Posterior vena cava (tissue), 2 donors: ENCODE measurements at regions of chr9 and their contacts with region 1.

Region 1: DNA sequence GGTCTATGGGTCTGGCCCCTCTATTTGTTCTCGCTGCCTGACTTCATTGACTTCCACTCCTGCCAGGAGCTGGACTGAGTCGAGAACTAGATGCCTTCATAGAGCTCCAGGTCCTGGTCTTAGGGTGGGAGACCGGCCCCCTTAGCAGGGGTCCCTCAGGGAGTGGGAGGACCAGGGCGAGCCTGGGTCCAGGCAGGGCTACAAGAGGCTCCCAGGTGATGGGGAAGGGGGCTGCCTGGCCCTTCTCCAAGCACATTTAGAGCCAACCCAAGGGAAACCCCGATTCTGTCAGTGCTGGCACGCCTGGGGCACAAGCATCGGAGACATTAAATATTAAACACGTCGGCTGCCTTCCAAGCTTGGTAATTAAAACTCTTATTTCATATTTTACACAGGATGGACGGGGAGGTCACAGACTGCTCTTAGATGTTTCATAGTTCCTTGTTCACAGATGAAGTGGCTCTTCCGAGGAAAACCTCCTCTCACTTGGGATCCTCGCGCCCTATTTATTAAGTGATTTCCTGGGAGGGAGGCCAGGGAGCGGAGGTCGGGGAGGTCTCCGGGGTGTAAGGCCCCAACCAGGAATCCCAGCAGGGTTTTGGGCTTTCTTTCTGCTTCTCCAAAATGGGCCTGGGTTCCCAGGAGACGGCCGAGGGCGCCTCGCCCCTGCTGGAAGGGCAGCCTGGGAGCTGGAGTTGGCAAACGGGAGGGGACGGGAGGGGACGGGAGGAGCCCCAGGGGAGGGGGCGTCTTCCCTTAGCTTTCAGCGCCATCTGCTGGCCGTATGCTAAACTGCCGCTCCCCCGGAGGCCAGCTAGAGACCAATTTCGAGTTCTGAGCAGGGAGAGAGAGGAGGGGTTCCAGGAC is 23.4 kb upstream of the ZBTB43 start:
- DNase-seq: peak; percentile 94

Region 2: DNA sequence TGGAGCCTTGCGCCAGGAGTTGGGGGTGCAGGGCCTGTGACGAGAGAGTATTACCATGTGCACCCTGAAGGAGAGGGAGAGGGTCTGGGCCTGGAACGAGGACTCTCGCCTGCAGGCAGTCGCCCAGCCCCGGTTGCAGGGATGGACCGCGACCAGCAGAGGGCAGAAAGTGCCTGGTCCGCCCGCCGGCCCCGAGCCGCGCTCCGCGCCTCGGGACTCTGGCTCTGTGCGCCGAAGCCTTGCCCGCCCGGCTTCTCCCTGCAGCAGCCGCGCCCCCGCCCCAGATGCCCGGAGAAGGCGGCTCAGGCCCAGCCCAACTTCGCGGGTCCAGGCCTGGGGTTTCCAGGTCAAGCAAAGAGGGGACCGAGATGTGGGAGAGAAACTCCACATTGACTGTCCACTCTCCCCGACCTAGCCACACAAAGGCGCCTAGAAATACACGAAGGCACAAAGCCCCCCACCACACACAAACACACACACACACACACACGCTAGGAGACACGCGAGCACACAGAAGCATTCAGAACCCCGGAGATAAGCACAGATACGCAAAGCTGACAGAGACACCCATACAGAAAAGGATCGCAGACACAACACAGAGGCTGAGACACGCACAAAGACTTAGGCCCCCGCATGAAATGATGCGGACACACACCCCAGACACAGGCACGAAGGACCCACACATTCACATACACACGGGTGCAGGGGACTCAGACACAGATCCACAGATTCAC is 169.7 kb before region 1 on chr9:
- intact Hi-C with region 1: loop called in 1 of 2 experiments (anchors 5 kb)
- DNase-seq: peak; percentile 93

Region 3: GRCh38 chr9:126636983-126637798 is 144.2 kb before region 1 on chr9:
- intact Hi-C with region 1: loop called in 1 of 2 experiments (anchors 1 kb)
- DNase-seq: no peak

Region 4: DNA sequence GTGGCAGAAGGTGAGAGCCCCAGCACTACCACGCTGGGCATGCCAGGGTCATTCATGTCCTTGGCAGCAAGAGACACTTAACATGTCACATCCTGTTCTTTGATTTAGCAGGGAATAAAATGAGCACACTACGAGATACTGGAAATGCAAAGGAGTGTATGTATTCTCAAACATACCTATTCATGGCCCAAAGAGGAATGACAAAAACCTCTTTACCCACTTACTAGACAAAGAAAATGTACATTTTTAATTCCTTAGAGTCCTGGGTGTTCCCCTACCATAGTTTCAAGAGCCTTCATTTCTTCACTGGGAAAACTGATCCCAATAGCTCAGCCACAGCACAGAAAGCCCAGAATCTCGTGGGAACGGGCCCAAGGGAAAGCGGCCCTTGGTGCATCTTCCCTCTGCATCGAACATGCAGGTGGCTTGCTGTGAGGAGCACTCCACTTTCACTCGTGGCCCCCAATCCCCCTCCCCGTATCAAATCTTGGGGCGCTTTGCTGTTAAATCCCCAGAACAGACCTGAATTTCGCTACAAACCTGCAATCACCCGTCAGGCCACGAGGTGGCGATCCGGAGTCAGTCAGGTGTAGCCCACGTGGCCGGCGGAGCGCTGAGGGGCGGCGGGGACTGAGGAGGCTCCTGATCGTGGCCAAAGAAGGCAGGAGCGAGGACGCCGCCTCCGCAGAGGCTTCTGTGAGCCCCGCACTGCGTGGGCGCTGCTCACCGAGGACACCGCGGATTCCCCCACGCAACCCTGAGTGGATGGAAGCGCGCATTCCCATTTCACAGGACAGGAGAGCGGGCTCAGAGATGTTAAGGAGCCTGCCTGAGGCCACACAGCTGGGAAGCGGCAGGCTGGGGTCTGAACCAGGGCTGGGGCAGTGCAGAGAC is 76.3 kb before region 1 on chr9:
- intact Hi-C with region 1: loop called (anchors 2 to 5 kb)
- DNase-seq: peak; percentile 93

Region 5: GRCh38 chr9:127626752-127627493 is 845.5 kb after region 1 on chr9:
- intact Hi-C with region 1: no loop called
- DNase-seq: peak; percentile 9